ENCODE measurements at regions of chr3 and their contacts with region 1.

Region 1: DNA sequence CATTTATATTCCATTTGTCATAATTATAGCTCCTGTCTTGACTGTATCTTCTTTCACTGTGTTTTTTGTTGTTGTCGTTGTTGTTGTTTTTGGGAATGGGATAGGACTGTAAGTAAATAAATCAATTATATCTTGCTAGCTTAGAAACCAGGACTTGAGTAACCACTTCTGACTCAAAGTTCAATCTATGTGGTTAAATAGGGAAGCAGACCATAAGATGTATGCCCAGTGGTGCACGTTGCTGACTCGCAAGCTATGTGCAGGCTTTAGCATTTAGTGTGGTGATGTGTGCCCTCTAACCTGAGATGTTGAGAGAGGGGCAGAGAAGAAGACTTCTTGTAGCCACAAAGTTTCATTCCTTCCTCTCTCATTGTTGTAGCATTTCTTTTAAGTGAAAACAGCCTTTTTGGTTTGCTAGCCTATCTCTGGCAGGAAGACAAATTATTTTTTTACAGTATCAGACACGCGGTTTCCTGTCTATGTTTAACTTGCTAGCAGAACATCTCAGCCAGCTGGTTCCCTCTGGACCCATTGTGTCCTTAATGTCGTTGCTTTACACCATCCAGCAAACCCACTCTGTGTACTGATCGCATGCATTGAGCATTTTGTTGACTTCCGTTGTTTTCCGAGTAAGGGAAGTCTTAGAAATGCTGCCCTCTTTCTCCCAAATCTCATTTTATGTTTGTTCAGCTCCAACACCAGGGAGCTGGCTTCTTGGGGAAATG is 52.1 kb downstream of the TGFBR2 start:
- DNase-seq: peak; percentile 83
- ATAC-seq: peak; percentile 58
- H3K4me3 ChIP-seq: peak overlapping the region; percentile 23
- H3K27ac ChIP-seq: peak overlapping the region; percentile 87
- H3K4me1 ChIP-seq: peaks cover 65% of the 10 kb centered on the region
- H3K27me3 ChIP-seq: no peaks in the 10 kb centered on the region
- CTCF ChIP-seq: no peak

Region 2: DNA sequence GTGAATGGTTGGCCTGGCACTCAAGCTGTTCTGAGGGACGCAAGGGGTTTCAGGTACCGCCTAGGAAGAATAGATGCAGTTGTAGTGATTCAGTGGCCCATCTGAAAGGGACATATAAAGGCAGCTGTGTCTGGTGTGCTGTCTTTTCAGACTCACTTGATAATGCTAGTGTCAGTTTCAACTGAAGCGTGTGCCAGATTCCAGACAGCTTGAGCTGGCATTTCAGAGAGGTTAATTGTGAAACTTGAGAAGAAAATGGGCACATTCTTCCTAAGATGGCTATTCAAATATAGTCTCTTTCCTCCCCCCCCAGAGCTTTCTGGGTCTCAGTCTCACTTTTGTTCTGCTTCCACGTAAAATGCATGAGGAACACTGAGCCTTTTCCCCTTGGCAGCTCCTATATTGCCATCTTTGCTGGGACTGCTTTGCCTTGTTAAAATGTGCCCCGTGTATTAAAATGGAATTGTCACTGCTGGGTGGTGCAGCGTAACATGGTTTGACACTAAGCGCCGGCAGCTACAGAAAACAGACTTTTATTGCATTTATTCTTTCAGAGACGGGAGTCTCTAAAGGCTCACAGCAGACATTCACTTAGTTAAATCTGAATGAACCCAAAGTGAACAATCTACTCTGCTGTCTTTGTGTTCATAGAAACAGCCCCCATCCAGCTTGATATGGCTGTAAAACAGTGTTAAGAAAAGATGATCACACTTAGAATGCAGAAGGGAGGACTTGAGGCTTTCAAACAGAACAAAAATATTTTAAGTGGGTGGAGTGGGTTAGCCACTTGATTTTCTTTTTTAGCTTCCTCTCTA is 898.9 kb before region 1 on chr3:
- CTCF ChIA-PET with region 1: no interaction called
- POLR2A ChIA-PET with region 1: no interaction called
- intact Hi-C with region 1: no loop called
- DNase-seq: peak; percentile 32
- ATAC-seq: no peak
- H3K4me3 ChIP-seq: no peak overlapping the region
- H3K27ac ChIP-seq: no peak overlapping the region
- H3K4me1 ChIP-seq: peaks cover 36% of the 10 kb centered on the region
- H3K27me3 ChIP-seq: no peaks in the 10 kb centered on the region
- CTCF ChIP-seq: no peak

Region 3: GRCh38 chr3:30538787-30539186 is 119.7 kb before region 1 on chr3:
- CTCF ChIA-PET with region 1: no interaction called
- POLR2A ChIA-PET with region 1: no interaction called
- intact Hi-C with region 1: loop called (anchors 1 kb)
- DNase-seq: peak; percentile 96
- ATAC-seq: peak; percentile 95
- H3K4me3 ChIP-seq: no peak overlapping the region; the same call in 1 of the 2 replicates
- H3K27ac ChIP-seq: peak overlapping the region; percentile 99
- H3K4me1 ChIP-seq: peaks cover 23% of the 10 kb centered on the region
- H3K27me3 ChIP-seq: no peaks in the 10 kb centered on the region
- CTCF ChIP-seq: no peak

Region 4: GRCh38 chr3:31182661-31183060 is 524.2 kb after region 1 on chr3:
- CTCF ChIA-PET with region 1: no interaction called
- POLR2A ChIA-PET with region 1: interaction called, 14 read pairs
- intact Hi-C with region 1: no loop called
- DNase-seq: no peak
- ATAC-seq: no peak
- H3K4me3 ChIP-seq: no peak overlapping the region
- H3K27ac ChIP-seq: no peak overlapping the region
- H3K4me1 ChIP-seq: peaks cover 11% of the 10 kb centered on the region; the same call in 1 of the 2 replicates
- H3K27me3 ChIP-seq: no peaks in the 10 kb centered on the region
- CTCF ChIP-seq: no peak